ENCODE measurements at regions of chr17 and their contacts with region 1.

Region 1: GRCh38 chr17:61412143-61412859 is 12.7 kb downstream of the TBX2 start:
- DNase-seq: peak; percentile 95
- H3K4me3 ChIP-seq: peak overlapping the region; percentile 28 to 75 (median 60)
- H3K27ac ChIP-seq: peak overlapping the region; percentile 43 to 84 (median 76)
- H3K4me1 ChIP-seq: peaks cover 31 to 87% (median 70%) of the 10 kb centered on the region in 6 donors
- H3K27me3 ChIP-seq: peaks cover 3 to 93% (median 63%) of the 10 kb centered on the region in 7 donors
- CTCF ChIP-seq: peak; percentile 90 to 100 (median 98)
- POLR2A ChIP-seq: no peak

Region 2: GRCh38 chr17:60720763-60721531 is 691.4 kb before region 1 on chr17:
- intact Hi-C with region 1: loop called (anchors 10 kb)
- DNase-seq: no peak
- H3K4me3 ChIP-seq: no peak overlapping the region
- H3K27ac ChIP-seq: no peak overlapping the region
- H3K4me1 ChIP-seq: peaks cover 0 to 12% (median 2%) of the 10 kb centered on the region in 6 donors
- H3K27me3 ChIP-seq: no peaks in the 10 kb centered on the region
- CTCF ChIP-seq: peak; percentile 28 to 84 (median 72)
- POLR2A ChIP-seq: no peak

Region 3: GRCh38 chr17:61265397-61265796 is 146.9 kb before region 1 on chr17:
- intact Hi-C with region 1: no loop called
- DNase-seq: no peak
- H3K4me3 ChIP-seq: no peak overlapping the region
- H3K27ac ChIP-seq: no peak overlapping the region
- H3K4me1 ChIP-seq: no peaks in the 10 kb centered on the region
- H3K27me3 ChIP-seq: no peaks in the 10 kb centered on the region
- CTCF ChIP-seq: no peak
- POLR2A ChIP-seq: no peak

Region 4: DNA sequence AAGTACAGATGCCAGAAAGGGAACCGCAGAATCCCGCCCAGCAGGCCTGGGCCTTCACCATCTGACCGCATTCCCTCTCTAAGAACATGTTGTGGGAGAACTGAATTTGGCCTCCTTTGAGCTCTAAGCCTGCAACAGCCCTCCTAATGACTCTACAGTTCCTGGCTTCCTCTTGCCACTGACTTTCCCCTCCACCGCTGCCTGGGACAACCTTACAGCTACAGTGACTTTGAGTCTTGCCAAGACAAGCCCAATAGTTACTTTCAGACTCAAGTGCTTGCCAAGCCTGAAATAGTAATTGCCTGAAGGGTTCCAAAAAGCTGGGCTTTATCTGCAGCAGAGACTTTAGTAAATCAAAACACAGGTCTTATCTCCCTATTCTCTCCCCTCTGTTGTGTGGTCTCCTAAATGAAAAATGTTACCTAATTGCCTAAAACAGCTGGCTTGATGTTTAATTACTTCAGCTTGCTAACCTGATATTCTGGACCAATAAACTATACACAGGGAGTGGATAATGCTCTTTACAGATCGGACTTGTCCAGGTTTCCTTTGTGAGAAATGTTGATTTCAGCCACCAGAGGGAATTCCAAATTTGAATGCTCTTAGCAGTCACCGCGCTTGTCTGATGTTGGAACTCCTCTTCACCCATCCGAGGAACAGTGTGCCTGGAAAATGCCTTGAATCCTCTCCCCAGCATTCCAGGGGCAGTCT is 97.8 kb before region 1 on chr17:
- intact Hi-C with region 1: no loop called
- DNase-seq: no peak
- H3K4me3 ChIP-seq: no peak overlapping the region
- H3K27ac ChIP-seq: peak overlapping the region in 6 of 8 donors; percentile 14 to 62 (median 44)
- H3K4me1 ChIP-seq: peaks cover 0 to 5% (median 0%) of the 10 kb centered on the region in 6 donors
- H3K27me3 ChIP-seq: no peaks in the 10 kb centered on the region
- CTCF ChIP-seq: no peak
- POLR2A ChIP-seq: no peak

Region 5: GRCh38 chr17:61338000-61338798 is 74.1 kb before region 1 on chr17:
- intact Hi-C with region 1: no loop called
- DNase-seq: no peak
- H3K4me3 ChIP-seq: no peak overlapping the region
- H3K27ac ChIP-seq: peak overlapping the region in 5 of 8 donors; percentile 26 to 63 (median 57)
- H3K4me1 ChIP-seq: peaks cover 0 to 7% (median 0%) of the 10 kb centered on the region in 6 donors
- H3K27me3 ChIP-seq: no peaks in the 10 kb centered on the region
- CTCF ChIP-seq: no peak
- POLR2A ChIP-seq: no peak

Region 6: DNA sequence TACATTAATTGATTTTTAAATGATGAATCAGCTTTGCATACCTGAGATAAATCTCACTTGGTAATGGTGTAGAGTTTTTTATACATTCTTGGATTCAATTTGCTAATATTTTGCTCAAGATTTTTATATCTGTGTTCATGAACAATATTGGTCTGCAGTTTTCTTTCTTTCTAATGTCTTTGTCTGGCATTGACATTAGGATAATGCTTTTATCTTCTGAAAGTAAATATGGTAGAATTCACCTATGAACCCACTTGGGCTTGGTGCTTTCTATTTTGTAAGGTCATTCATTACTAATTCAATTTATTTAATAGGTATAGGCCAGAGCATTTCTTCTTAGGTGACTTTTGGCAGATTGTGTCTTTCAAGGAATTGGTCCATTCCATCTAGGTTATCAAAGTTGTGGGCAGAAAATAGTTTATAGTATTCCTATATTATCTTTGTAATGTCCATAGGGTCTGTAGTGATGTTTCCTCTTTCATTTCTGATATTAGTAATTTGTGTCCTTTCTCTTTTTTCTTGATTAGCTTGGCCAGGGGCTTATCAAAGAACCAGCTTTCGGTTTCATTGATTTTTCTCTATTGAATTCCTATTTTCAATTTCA is 133.1 kb after region 1 on chr17:
- intact Hi-C with region 1: loop called (anchors 5 kb)
- DNase-seq: no peak
- H3K4me3 ChIP-seq: no peak overlapping the region
- H3K27ac ChIP-seq: no peak overlapping the region
- H3K4me1 ChIP-seq: no peaks in the 10 kb centered on the region
- H3K27me3 ChIP-seq: peaks cover 0 to 24% (median 9%) of the 10 kb centered on the region in 7 donors
- CTCF ChIP-seq: no peak
- POLR2A ChIP-seq: no peak

Region 7: GRCh38 chr17:61647047-61647446 is 234.7 kb after region 1 on chr17:
- intact Hi-C with region 1: no loop called
- DNase-seq: no peak
- H3K4me3 ChIP-seq: no peak overlapping the region
- H3K27ac ChIP-seq: no peak overlapping the region
- H3K4me1 ChIP-seq: no peaks in the 10 kb centered on the region
- H3K27me3 ChIP-seq: peaks cover 0 to 6% (median 0%) of the 10 kb centered on the region in 7 donors
- CTCF ChIP-seq: no peak
- POLR2A ChIP-seq: no peak